ENCODE measurements at regions of chr7 and their contacts with region 1.

Region 1: GRCh38 chr7:88243345-88243909 is 23.6 kb upstream of the SRI start:
- DNase-seq: no peak
- ATAC-seq: peak; percentile 89

Region 2: DNA sequence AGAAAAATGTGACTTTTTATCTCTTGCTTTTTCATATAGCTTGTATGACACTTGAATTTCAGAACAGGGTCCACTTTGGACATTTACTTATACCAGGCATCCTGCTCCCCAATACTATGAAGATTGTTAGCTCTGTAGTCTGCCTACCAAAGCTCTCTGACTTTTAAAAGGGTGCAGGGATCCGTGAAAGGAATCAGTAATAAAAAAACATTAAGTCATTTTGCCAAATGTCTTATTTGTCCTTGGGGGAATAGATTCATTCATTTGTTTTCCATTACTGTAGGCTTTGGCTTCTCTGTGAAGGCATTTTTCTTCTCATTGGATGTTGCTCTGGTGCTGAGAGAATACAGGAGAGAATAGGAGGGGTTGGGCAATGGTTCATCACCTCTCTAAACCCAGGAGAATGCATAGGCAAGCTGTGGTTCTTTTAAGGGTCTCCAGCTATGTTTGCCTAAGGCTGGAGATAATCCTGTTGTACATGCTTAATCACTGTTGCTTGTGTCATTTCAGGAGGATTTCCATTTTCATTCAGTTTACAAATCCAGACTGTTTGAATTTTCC is 127.1 kb before region 1 on chr7:
- intact Hi-C with region 1: no loop called
- DNase-seq: no peak
- ATAC-seq: no peak

Region 3: DNA sequence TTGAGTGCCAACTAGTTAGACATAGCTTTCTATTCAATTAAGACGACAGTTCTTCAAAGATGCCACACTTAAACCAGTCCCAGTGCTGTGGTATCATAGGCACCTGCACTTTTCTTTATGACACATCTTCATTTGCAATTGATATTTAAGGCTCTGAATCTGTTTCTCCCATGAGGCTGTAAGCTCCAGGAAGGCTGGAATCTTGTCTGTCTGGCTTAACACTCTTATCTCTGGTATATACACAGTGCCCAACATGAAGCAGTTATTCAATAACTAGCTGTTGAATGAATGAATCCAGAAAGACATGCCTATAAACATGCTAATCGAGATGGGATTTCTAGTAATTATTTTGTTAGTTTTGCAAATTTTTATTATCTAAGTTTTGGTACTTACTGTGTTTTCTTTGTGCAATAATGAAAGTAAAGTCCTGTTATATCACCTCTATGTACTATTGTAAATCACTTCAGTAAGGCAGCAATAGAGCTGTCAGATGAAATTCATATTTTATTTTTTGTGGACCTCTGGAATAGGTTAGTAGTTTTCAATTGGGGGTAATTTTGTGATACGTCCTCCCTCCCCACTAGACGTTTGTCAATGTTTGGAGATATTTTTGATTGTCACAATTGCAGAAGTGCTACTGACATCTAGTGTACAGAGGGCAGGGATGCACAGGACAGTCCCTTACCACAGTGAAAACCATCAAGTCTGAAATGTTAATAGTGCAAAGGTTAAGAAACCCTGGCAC is 114.5 kb after region 1 on chr7:
- intact Hi-C with region 1: loop called in 1 of 2 experiments (anchors 10 kb)
- DNase-seq: no peak
- ATAC-seq: peak; percentile 87